Dendritic cell treated with granulocyte-macrophage colony-stimulating factor and Interleukin-4, amounts not matched to agents 40 ng/mL and 50 ng/mL, for 4 days (primary cell): ENCODE measurements at regions of chr10 and their contacts with region 1.

Region 1: DNA sequence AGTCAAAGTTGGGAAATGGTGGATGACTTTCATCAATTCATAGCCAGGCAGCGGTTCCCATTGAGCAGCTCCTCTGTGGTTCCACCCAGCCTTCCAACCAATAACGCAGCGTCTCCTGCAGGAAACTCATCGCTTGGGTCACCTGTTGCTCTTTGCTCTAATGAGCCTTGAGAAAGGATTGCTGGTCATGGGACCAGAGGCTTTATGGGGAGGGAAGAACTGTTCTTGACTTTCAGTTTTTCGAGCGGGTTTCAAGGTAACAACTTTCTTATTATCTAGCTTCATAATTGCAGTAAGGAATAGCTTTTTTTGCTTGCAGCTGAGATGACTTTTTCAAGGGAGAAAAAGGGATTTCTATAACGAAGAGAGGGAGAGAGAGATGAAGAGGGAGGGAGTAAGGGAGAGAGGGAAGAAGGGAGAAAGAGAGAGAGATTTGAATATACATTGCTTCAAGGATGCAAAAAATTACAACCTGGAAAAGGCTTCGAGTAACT is 405 bp upstream of the ENTPD1 start:
- H3K4me3 Mint-ChIP-seq: peak overlapping the region; percentile 90
- H3K27ac Mint-ChIP-seq: peak overlapping the region; percentile 98
- H3K4me1 Mint-ChIP-seq: peaks cover 47% of the 10 kb centered on the region
- H3K27me3 Mint-ChIP-seq: no peaks in the 10 kb centered on the region

Region 2: GRCh38 chr10:95693668-95694534 is 61.7 kb before region 1 on chr10 and contains the start of gene TCTN3:
- intact Hi-C with region 1: loop called (anchors 1 kb)
- H3K4me3 Mint-ChIP-seq: peak within 1 kb of the TSS; percentile 95
- H3K27ac Mint-ChIP-seq: peak within 1 kb of the TSS; percentile 87
- H3K4me1 Mint-ChIP-seq: peaks cover 65% of the 10 kb centered on the region
- H3K27me3 Mint-ChIP-seq: no peaks in the 10 kb centered on the region

Region 3: GRCh38 chr10:95716466-95717224 is 38.9 kb before region 1 on chr10:
- intact Hi-C with region 1: no loop called
- H3K4me3 Mint-ChIP-seq: no peak overlapping the region
- H3K27ac Mint-ChIP-seq: no peak overlapping the region
- H3K4me1 Mint-ChIP-seq: peaks cover 27% of the 10 kb centered on the region
- H3K27me3 Mint-ChIP-seq: no peaks in the 10 kb centered on the region

Region 4: DNA sequence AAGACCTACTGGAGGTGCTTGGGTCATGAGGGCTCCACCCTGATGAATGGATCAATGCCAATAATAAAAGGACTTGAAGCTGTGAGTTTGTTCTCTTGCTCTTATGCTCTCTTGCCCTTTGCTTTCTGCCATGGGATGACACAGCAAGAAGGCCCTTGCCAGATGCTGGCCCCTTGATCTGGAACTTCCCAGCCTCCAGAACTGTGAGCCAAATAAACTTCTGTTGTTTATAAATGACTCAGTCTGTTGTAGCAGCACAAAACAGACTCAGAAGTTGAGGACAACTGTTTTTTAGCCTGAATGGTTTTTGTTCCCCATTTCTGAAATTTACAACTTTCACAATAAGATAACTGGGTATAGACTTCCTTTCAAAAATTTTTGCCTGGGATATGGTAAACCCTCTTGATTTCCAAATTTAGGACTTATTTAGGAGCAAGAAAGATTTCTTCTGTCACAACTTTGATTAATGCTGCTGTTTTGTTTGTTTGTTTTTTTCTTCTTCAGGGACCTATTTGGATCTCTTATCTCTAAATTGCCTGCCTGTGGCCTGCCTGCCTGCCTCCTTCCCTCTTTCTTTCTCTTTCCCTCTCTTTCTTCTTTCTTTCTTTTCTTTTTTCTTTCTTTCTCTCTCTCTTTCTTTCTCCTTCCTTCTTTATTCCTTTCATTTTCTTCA is 12.5 kb after region 1 on chr10:
- intact Hi-C with region 1: loop called (anchors 1 kb)
- H3K4me3 Mint-ChIP-seq: peak overlapping the region; percentile 2
- H3K27ac Mint-ChIP-seq: peak overlapping the region; percentile 87
- H3K4me1 Mint-ChIP-seq: peaks cover 54% of the 10 kb centered on the region
- H3K27me3 Mint-ChIP-seq: no peaks in the 10 kb centered on the region

Region 5: DNA sequence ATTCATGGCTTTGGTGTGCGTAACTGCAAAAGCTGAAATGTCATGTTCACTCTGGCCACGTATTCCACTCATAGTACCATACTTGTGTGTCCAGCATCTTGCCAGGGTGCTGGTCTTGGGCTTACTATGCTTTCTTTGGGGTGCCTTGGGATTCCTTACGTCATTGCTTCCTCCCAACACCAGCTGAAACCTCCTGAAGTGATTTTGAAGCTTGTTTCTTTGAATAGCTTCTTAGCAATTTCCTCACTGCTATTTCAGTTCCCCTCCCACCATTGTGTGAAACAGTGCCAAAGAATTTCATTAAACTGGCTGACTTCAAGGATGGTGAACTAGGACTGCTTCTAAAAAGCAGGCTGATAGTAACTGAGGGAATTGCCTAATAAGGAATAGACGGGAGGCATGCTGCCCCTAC is 37.3 kb after region 1 on chr10:
- intact Hi-C with region 1: loop called (anchors 5 kb)
- H3K4me3 Mint-ChIP-seq: peak overlapping the region; percentile 9
- H3K27ac Mint-ChIP-seq: peak overlapping the region; percentile 96
- H3K4me1 Mint-ChIP-seq: peaks cover 80% of the 10 kb centered on the region
- H3K27me3 Mint-ChIP-seq: no peaks in the 10 kb centered on the region

Region 6: DNA sequence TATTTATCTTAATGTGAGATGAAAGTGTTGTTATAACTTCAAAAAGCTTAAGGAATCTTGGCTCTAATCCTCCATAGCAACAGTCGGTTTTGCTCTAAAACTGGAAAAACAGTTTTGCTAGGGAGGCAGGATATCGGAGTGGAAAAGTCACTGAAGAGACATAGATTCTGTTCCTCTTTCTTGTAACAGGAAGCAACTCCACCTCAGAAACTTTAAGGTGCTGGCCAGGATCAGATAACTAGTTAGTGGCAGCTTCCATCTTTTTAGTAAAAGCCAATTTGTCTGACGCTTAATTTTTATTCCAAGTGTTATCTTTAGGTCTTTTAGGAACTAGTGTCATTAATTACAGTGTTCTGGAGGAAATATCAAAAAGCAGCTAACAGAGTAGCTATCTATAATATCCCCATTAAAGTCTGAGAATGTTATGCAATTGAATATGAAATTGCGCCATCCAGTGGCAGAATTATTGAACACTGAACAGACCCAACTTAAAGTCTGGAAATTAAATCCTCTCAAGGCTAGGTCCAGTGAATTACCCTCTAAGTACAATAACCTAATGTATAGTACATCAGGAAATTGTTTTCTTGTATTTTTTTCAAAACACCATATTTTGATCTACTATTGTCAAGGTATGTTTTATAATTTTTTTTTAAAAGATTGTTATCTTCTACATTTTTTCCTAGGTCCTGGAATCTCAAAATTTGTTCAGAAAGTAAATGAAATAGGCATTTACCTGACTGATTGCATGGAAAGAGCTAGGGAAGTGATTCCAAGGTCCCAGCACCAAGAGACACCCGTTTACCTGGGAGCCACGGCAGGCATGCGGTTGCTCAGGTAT is 86.3 kb after region 1 on chr10:
- intact Hi-C with region 1: loop called (anchors 5 kb)
- H3K4me3 Mint-ChIP-seq: no peak overlapping the region
- H3K27ac Mint-ChIP-seq: peak overlapping the region; percentile 71
- H3K4me1 Mint-ChIP-seq: peaks cover 43% of the 10 kb centered on the region
- H3K27me3 Mint-ChIP-seq: no peaks in the 10 kb centered on the region